Left ventricle myocardium superior (tissue), 1 donor: ENCODE measurements at regions of chr17 and their contacts with region 1.

Region 1: DNA sequence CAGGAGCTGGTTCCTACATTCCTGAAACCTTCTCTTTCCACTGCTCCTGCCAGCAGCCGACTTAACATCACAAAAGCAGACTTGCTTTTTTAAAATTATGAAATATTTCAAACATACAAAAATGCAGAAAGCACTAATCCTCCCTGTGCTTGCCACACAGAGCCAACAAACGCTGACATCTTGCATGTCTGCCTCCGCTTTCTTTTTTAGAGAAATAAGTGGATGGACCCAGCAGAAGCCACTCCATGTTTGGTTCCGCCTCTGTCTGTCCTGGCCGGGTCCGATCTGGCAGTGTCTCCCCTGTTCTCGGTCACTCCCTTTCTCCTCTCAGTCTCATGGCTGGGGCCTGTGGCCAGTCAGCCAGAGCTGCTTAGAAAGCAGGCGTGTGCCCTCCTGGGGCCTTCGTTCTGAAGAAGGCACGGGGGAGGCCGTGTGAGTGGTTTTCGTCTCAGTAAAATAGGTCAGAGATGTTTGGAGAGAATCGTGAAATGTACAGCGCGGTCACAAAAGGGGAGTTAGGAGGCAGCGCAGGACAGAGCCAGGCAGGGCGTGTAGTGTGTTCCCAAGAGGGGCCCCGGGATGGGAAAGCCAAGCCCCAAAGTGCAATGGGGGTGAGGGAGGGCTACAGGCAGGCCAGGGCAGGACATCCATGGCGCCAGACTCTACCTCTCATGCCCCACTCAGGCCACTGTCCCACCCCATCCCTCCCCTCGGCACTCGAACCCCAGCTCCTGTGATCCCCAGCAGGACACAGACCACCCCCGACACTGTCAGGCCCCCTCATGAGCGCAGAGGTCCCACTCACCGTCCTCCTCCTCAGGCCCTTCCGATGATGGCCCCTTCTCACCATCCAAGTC is 23.2 kb downstream of the MXRA7 start:
- DNase-seq: peak; percentile 85
- ATAC-seq: peak; percentile 58

Region 2: GRCh38 chr17:76716146-76716833 is 28.8 kb after region 1 on chr17:
- intact Hi-C with region 1: loop called (anchors 2 kb)
- DNase-seq: no peak
- ATAC-seq: peak; percentile 69